MCF 10A (cell line): ENCODE measurements at regions of chr6 and their contacts with region 1.

Region 1: GRCh38 chr6:33744001-33744848 is 2.5 kb downstream of the IP6K3 start:
- DNase-seq: peak; percentile 97
- H3K4me3 Mint-ChIP-seq: peak overlapping the region; percentile 3
- H3K27ac Mint-ChIP-seq: no peak overlapping the region
- H3K4me1 Mint-ChIP-seq: peaks cover 45% of the 10 kb centered on the region
- H3K27me3 Mint-ChIP-seq: no peaks in the 10 kb centered on the region
- CTCF ChIP-seq: peak; percentile 74

Region 2: GRCh38 chr6:33761922-33762629 is 17.9 kb after region 1 on chr6:
- CTCF ChIA-PET with region 1: interaction called, 228 read pairs
- POLR2A ChIA-PET with region 1: interaction called, 16 read pairs
- intact Hi-C with region 1: loop called (anchors 2 kb)
- DNase-seq: peak; percentile 75
- H3K4me3 Mint-ChIP-seq: no peak overlapping the region
- H3K27ac Mint-ChIP-seq: no peak overlapping the region
- H3K4me1 Mint-ChIP-seq: peaks cover 15% of the 10 kb centered on the region
- H3K27me3 Mint-ChIP-seq: no peaks in the 10 kb centered on the region
- CTCF ChIP-seq: peak; percentile 80

Region 3: GRCh38 chr6:33771146-33772081 is 27.2 kb after region 1 on chr6:
- CTCF ChIA-PET with region 1: interaction called, 228 read pairs
- POLR2A ChIA-PET with region 1: interaction called, 4 read pairs
- intact Hi-C with region 1: no loop called
- DNase-seq: peak; percentile 69
- H3K4me3 Mint-ChIP-seq: no peak overlapping the region
- H3K27ac Mint-ChIP-seq: no peak overlapping the region
- H3K4me1 Mint-ChIP-seq: no peaks in the 10 kb centered on the region
- H3K27me3 Mint-ChIP-seq: no peaks in the 10 kb centered on the region
- CTCF ChIP-seq: peak; percentile 90

Region 4: GRCh38 chr6:33851959-33852358 is 107.7 kb after region 1 on chr6:
- CTCF ChIA-PET with region 1: no interaction called
- POLR2A ChIA-PET with region 1: no interaction called
- intact Hi-C with region 1: no loop called
- DNase-seq: peak; percentile 38
- H3K4me3 Mint-ChIP-seq: no peak overlapping the region
- H3K27ac Mint-ChIP-seq: no peak overlapping the region
- H3K4me1 Mint-ChIP-seq: no peaks in the 10 kb centered on the region
- H3K27me3 Mint-ChIP-seq: no peaks in the 10 kb centered on the region
- CTCF ChIP-seq: peak; percentile 51

Region 5: GRCh38 chr6:33967966-33968724 is 223.9 kb after region 1 on chr6:
- CTCF ChIA-PET with region 1: no interaction called
- POLR2A ChIA-PET with region 1: no interaction called
- intact Hi-C with region 1: no loop called
- DNase-seq: peak; percentile 24
- H3K4me3 Mint-ChIP-seq: no peak overlapping the region
- H3K27ac Mint-ChIP-seq: no peak overlapping the region
- H3K4me1 Mint-ChIP-seq: no peaks in the 10 kb centered on the region
- H3K27me3 Mint-ChIP-seq: peaks cover 51% of the 10 kb centered on the region
- CTCF ChIP-seq: no peak

Region 6: GRCh38 chr6:34154668-34155447 is 410.6 kb after region 1 on chr6:
- CTCF ChIA-PET with region 1: interaction called, 15 read pairs
- POLR2A ChIA-PET with region 1: no interaction called
- intact Hi-C with region 1: loop called (anchors 1 kb)
- DNase-seq: peak; percentile 43
- H3K4me3 Mint-ChIP-seq: peak overlapping the region; percentile 46
- H3K27ac Mint-ChIP-seq: no peak overlapping the region
- H3K4me1 Mint-ChIP-seq: no peaks in the 10 kb centered on the region
- H3K27me3 Mint-ChIP-seq: peaks cover 63% of the 10 kb centered on the region
- CTCF ChIP-seq: peak; percentile 99